Cardiac septum (tissue), 1 donor: ENCODE measurements at regions of chr6 and their contacts with region 1.

Region 1: GRCh38 chr6:163413345-163414116 is 987 bp upstream of the QKI start:
- DNase-seq: peak; percentile 96

Region 2: DNA sequence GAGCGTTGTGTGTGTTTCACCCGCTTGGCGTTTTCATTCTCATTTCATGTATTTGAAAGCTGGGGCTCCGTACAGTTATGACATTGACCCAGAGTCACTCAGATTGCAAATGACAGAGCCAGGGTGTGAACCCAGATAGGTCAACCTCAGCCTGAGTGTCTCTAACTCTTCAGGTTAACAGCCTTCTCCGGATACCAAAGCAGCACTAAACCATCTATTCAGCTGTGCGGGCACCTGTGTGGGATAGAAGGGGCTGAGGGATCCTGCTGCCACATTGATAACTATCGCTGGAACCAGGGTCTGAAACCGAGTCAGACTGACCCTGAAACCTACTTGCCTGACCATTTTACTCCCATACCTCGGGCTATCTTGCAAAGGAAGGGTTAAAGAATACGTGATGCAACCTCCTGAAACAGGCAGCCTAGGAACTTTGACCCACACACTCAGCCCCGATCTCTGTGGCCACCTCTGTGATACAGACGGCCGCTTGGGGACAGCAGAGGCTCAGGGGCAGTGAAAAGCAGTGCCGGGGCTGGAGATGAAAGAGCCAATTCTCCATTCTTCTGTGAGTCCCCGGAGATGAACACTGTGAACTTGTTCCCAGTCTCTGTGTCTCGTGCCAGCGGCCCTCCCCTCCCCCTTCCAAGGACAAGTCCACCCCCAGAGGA is 232.5 kb before region 1 on chr6:
- intact Hi-C with region 1: loop called (anchors 1 kb)
- DNase-seq: peak; percentile 89

Region 3: GRCh38 chr6:163253556-163254213 is 159.8 kb before region 1 on chr6:
- intact Hi-C with region 1: no loop called
- DNase-seq: no peak

Region 4: DNA sequence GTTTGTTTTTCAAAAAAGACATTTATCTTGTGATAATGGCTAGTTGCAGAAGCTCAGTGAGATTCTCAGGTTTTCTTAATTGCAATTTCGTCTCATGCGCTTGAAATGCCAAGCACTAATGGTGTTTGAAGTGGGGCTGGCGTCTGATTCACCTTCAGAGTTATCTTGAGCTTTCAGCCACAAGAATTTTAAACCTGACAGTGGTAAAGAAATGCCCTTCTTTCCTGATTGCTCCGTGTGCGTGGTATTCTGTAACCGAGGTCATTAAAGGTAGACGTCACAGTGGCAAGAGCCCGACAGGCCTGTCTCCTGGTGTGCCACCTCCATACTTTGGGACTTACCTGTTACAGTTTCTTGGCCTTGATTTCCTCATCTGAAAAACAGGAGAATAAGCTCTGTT is 125.5 kb before region 1 on chr6:
- intact Hi-C with region 1: loop called (anchors 2 kb)
- DNase-seq: no peak

Region 5: DNA sequence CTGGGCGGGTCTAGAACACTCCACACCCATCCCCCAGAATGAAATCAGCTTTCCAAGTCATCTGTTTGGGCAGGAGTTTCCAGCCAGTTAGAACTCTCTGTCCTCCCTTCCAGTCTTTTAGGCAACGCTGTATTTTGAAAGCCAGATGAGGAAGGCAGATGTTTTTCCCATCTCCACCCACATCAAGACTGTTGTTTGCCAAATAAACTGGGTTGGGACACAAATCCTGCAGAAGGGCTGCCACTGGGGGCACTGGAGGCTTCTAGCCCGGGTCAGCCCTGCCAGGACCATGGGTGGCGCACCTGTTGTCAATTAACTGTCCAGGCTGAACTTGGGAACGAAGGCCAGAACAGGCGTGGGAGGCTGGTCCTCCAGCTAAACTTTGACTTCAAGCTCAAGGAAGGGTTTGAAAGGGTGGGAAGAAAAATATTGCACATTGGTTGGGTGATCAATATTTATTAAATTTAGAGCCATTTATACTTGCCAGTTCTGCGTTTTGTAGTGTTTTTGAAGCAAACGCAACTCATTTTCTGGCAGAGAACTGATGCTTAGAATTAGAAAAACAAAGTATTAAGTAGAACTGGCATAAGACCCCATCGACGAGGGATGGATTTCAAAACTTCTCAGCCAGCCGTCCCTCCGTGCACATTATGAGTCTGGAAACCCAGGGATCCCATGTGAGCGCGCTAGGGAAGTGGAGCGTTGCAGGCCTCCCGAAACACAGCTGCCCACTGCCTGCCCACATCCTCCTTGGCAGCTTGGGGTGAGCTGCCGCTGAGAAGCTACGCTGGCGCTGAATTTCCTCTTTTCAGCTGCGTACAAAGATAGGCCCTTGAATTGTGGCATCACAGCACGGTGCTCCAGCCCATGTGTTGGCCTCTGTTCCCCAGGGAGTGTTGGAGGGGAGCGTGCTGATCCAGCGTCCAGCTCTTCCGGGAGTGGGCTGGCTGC is 298.4 kb after region 1 on chr6:
- intact Hi-C with region 1: loop called (anchors 5 kb)
- DNase-seq: peak; percentile 83

Region 6: DNA sequence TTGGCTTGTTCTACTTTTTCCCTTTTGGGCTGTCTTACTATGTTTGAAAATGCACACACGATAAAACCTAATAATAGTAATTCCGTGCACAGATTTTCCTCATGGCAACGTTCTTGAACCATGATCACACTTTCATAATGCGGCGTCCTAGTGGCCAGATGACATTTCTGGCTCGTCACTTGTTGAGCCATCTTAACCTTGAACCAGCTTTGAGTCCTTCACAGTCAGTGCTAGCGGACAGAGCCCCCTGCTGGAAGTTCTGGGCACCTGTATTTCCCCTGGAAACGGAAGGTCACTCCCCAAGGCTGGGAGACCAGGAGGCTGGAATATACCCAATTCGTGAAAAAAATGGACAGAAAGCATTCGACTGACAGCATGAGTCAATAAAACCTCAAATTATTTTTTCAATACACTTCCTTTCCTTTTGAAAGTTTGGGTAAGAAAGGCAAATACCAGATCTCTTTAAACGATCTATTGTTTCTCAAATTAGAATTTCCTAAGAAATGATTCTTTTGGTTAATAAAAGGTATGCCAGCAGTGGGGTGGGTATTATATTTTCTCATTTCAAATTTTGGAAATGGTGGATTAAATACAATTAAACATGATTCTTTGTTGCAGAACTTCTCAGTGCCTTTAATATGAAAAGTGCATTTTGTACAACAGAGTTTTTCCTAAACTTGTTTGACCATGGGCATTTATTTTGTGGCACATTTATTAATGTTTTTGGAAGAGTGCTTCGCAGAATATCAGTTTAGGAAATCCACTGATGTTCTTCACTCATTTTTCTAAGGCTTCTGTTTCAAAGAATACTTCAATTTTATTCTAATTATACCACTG is 543.3 kb after region 1 on chr6:
- intact Hi-C with region 1: loop called (anchors 2 kb)
- DNase-seq: peak; percentile 89